B cell (primary cell): ENCODE measurements at regions of chr9 and their contacts with region 1.

Region 1: DNA sequence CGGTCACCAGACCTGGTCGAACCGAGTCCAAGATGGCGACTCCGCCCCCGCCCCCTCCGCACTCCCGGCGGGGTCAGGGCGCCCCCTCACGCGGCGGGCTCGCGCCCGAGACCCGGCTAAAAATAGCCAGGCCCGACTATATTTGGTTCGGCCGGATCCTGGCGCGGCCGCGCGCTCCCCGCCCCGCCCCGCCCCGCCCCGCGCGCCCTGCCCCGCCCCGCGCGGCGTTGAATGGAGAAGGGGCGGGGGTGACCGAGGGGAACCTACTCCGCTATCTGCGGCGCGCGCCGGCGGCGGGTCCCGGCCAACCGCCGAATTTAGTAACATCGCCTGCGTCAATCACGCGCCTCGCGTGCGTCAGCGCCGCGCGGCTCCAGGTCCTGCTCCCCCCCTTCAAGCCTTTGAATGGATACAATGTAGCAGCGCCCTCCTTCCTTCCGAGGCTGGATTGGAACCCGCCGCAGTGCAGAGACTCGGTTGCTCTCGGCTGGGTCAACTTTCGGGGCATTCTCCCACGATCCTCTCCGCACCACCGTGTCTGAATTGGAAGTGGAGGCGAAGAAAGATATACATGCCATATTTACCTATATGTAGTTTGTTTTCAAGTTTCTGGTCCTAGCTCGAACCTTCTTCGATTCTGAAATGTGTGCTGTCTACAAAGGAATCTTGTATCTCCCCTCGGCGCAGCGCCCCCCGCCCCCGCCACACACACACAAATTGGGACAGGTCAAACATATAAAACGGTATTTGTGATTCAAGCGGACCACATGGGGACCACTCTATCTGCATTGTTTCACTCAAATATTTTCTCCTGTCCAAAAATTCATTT is 1.6 kb upstream of the NR4A3 start:
- DNase-seq: peak; percentile 98
- ATAC-seq: peak; percentile 54
- H3K4me3 ChIP-seq: peak overlapping the region; percentile 73 to 100 (median 80)
- H3K4me3 Mint-ChIP-seq: peak overlapping the region; percentile 100
- H3K27ac ChIP-seq: peak overlapping the region; percentile 94 to 98
- H3K27ac Mint-ChIP-seq: peak overlapping the region; percentile 98
- H3K4me1 ChIP-seq: peaks cover 41 to 49% of the 10 kb centered on the region in 2 donors
- H3K4me1 Mint-ChIP-seq: peaks cover 47% of the 10 kb centered on the region
- H3K27me3 ChIP-seq: peaks cover 0 to 33% (median 18%) of the 10 kb centered on the region in 4 experiments
- H3K27me3 Mint-ChIP-seq: peaks cover 10% of the 10 kb centered on the region
- CTCF ChIP-seq: no peak

Region 2: GRCh38 chr9:99184475-99185347 is 635.4 kb before region 1 on chr9:
- CTCF ChIA-PET with region 1: interaction called, 46 read pairs
- POLR2A ChIA-PET with region 1: interaction called, 17 read pairs
- intact Hi-C with region 1: loop called (anchors 1 kb)
- DNase-seq: peak; percentile 89
- ATAC-seq: peak; percentile 86
- H3K4me3 ChIP-seq: peak overlapping the region in 3 of 5 experiments; percentile 6 to 36 (median 29)
- H3K4me3 Mint-ChIP-seq: peak overlapping the region; percentile 62
- H3K27ac ChIP-seq: peak overlapping the region in 1 of 2 donors; percentile 3
- H3K27ac Mint-ChIP-seq: peak overlapping the region; percentile 84
- H3K4me1 ChIP-seq: peaks cover 49 to 65% of the 10 kb centered on the region in 2 donors
- H3K4me1 Mint-ChIP-seq: peaks cover 92% of the 10 kb centered on the region
- H3K27me3 ChIP-seq: no peaks in the 10 kb centered on the region
- H3K27me3 Mint-ChIP-seq: no peaks in the 10 kb centered on the region
- CTCF ChIP-seq: peak; percentile 99

Region 3: DNA sequence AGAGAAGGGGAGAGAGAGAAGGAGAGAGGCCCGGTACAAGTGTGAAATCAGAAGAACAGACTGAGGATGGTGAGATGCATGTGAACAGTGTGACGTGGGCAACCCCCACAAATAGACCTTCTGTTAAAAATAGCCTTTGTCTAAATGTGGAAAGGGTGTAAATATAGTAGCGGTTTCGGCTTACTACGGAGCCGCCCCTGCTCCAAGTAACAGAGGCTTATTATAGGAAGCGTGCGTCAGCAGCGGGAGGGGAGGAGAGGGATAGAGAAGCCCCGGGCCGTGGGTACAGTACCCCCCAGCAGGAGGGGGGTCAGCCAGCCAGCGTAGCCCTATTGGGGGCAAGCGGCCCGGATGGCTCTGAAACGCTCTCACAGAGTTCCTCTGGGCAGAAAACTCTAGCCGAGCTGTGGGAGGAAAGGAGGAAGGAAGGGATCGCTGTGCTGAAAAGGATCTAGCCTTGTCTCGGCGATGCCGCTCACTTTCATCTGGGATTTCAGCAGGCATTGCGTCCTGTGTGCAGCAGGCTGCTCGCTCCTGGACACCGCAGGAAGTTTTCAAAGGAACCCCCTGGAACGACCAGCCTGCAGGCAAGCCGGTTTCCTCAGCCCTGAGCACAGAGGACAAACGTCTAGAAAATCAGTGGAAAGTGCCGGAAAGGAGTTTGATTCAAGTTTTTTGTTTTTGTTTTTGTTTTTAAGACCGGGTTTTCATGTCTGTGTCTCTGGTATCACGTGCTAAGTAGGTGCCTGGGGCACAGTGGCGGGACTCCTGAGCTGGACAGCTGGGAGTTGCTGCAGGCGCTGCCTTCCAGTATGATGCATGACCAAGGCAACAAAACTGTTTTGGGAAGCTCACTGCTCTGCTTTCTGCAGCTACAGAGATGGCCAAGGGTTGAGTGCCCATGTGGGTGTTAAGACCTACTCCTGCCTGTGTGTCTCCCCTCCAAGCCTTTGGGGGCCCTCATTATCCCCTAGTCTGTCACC is 451.4 kb before region 1 on chr9:
- CTCF ChIA-PET with region 1: no interaction called
- POLR2A ChIA-PET with region 1: no interaction called
- intact Hi-C with region 1: no loop called
- DNase-seq: peak; percentile 38
- ATAC-seq: peak; percentile 47
- H3K4me3 ChIP-seq: peak overlapping the region in 3 of 5 experiments; percentile 17 to 48 (median 29)
- H3K4me3 Mint-ChIP-seq: peak overlapping the region; percentile 75
- H3K27ac ChIP-seq: no peak overlapping the region
- H3K27ac Mint-ChIP-seq: peak overlapping the region; percentile 15
- H3K4me1 ChIP-seq: peaks cover 10 to 12% of the 10 kb centered on the region in 2 donors
- H3K4me1 Mint-ChIP-seq: peaks cover 19% of the 10 kb centered on the region
- H3K27me3 ChIP-seq: peaks cover 0 to 28% (median 3%) of the 10 kb centered on the region in 4 experiments
- H3K27me3 Mint-ChIP-seq: peaks cover 31% of the 10 kb centered on the region
- CTCF ChIP-seq: no peak

Region 4: DNA sequence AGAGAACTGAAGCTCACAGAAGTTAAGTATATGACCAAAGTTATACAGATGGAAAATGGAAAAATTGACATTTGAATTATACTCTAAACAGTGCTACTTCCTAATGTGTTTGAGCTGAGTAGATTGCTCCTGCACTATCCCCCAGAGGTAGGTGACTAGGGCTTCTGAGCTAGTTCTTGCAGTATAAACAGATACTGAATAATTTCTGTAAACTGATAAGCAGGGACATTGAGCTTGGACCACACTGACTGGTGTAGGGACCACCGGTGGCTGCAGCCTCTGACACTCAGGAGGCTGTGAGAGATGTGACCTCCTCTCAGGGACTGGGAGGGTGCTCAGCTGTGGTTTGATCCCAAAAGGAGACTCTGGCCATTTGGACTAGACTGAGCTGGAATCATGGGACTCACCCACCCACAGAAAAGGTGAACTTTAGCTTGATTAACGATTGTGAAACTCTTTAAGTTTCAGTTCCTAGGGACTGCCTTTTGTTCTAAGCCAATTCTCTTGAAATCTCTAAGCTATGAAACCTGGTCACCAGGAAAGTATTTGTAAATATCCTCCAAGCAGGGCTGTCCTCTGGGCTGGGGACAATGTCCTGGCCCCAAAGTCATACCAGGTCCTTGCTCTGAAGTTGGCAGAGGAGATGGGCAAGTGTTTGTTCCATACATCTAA is 306.5 kb before region 1 on chr9:
- CTCF ChIA-PET with region 1: no interaction called
- POLR2A ChIA-PET with region 1: no interaction called
- intact Hi-C with region 1: loop called (anchors 10 kb)
- DNase-seq: peak; percentile 40
- ATAC-seq: peak; percentile 37
- H3K4me3 ChIP-seq: no peak overlapping the region
- H3K4me3 Mint-ChIP-seq: peak overlapping the region; percentile 58
- H3K27ac ChIP-seq: peak overlapping the region; percentile 45 to 57
- H3K27ac Mint-ChIP-seq: peak overlapping the region; percentile 88
- H3K4me1 ChIP-seq: peaks cover 71% of the 10 kb centered on the region in 2 donors
- H3K4me1 Mint-ChIP-seq: peaks cover 77% of the 10 kb centered on the region
- H3K27me3 ChIP-seq: no peaks in the 10 kb centered on the region
- H3K27me3 Mint-ChIP-seq: no peaks in the 10 kb centered on the region
- CTCF ChIP-seq: no peak

Region 5: GRCh38 chr9:99736291-99736690 is 83.8 kb before region 1 on chr9:
- CTCF ChIA-PET with region 1: no interaction called
- POLR2A ChIA-PET with region 1: no interaction called
- intact Hi-C with region 1: no loop called
- DNase-seq: no peak
- ATAC-seq: no peak
- H3K4me3 ChIP-seq: no peak overlapping the region
- H3K4me3 Mint-ChIP-seq: no peak overlapping the region
- H3K27ac ChIP-seq: no peak overlapping the region
- H3K27ac Mint-ChIP-seq: no peak overlapping the region
- H3K4me1 ChIP-seq: peaks cover 6 to 8% of the 10 kb centered on the region in 2 donors
- H3K4me1 Mint-ChIP-seq: peaks cover 7% of the 10 kb centered on the region
- H3K27me3 ChIP-seq: no peaks in the 10 kb centered on the region
- H3K27me3 Mint-ChIP-seq: peaks cover 8% of the 10 kb centered on the region
- CTCF ChIP-seq: no peak

Region 6: GRCh38 chr9:99906403-99907207 is 86.5 kb after region 1 on chr9 and contains the start of gene STX17:
- CTCF ChIA-PET with region 1: interaction called, 5 read pairs
- POLR2A ChIA-PET with region 1: interaction called, 5 read pairs
- intact Hi-C with region 1: loop called (anchors 1 kb)
- DNase-seq: peak; percentile 93
- ATAC-seq: peak; percentile 88
- H3K4me3 ChIP-seq: peak within 1 kb of the TSS; percentile 75 to 98 (median 97)
- H3K4me3 Mint-ChIP-seq: peak within 1 kb of the TSS; percentile 99
- H3K27ac ChIP-seq: peak within 1 kb of the TSS; percentile 91 to 96
- H3K27ac Mint-ChIP-seq: peak within 1 kb of the TSS; percentile 98
- H3K4me1 ChIP-seq: peaks cover 4 to 14% of the 10 kb centered on the region in 2 donors
- H3K4me1 Mint-ChIP-seq: peaks cover 17% of the 10 kb centered on the region
- H3K27me3 ChIP-seq: peaks cover 0 to 3% (median 0%) of the 10 kb centered on the region in 4 experiments
- H3K27me3 Mint-ChIP-seq: no peaks in the 10 kb centered on the region
- CTCF ChIP-seq: no peak
- total RNA-seq, gene STX17: 40.2 and 42.9 TPM in 2 replicates

Region 7: DNA sequence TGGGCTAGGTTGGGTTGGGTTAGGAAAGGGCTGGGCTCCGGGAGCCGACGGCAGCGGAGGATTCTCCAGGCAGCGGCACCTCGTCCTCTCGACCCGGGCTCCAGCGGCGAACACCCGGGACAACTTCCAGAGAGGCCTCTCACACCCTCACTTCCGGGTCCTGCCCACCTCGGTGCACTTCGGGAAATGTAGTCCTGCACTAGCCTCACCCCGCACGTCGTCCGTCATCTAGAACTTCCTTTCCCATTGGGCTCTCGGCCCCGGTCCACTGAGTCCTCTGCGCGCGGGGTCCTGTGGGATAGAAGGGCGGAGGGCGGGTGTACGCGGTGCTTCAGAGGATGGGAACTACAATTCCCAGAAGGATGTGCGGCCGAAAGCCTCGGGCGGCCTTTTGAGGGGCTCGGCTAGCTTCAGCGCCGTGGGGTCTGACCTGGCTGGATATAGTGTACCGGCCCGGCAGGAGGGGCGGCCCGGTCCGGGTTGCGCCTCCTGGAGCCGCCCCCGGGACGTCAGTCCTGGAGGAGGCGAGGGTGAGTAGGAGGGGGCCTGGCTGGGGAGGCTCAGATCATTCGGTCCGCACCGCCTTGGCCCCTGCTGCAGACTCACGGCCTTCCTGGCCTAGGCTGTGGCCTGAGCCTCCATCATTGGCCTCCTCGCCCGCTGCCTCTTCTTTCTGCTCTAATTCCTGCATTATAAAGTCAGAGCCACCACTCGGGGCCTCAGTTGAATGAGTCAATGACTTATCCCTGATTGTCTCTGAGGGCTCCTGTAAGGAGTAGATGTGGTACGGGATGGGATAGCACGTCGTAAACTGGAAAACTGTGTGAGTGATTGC is 279.0 kb after region 1 on chr9 and contains the starts of genes ERP44 and INVS:
- CTCF ChIA-PET with region 1: no interaction called
- POLR2A ChIA-PET with region 1: no interaction called
- intact Hi-C with region 1: loop called (anchors 2 kb)
- DNase-seq: peak; percentile 98
- ATAC-seq: peak; percentile 99
- H3K4me3 ChIP-seq: peak within 1 kb of the TSS; percentile 79 to 98 (median 95)
- H3K4me3 Mint-ChIP-seq: peak within 1 kb of the TSS; percentile 99
- H3K27ac ChIP-seq: peak within 1 kb of the TSS; percentile 77 to 90
- H3K27ac Mint-ChIP-seq: peak within 1 kb of the TSS; percentile 98
- H3K4me1 ChIP-seq: peaks cover 24 to 27% of the 10 kb centered on the region in 2 donors
- H3K4me1 Mint-ChIP-seq: peaks cover 41% of the 10 kb centered on the region
- H3K27me3 ChIP-seq: no peaks in the 10 kb centered on the region
- H3K27me3 Mint-ChIP-seq: no peaks in the 10 kb centered on the region
- CTCF ChIP-seq: no peak
- total RNA-seq, gene ERP44: 16.9 and 18.4 TPM in 2 replicates
- total RNA-seq, gene INVS: 34.6 and 37.0 TPM in 2 replicates